Ovary (tissue), 10 donors: ENCODE measurements at regions of chr3 and their contacts with region 1.

Region 1: GRCh38 chr3:73502609-73503583 is 121.8 kb downstream of the PDZRN3 start:
- DNase-seq: peak; percentile 76 to 86 (median 82)
- H3K4me3 ChIP-seq: no peak overlapping the region
- H3K27ac ChIP-seq: peak overlapping the region in 1 of 2 donors; percentile 38
- H3K4me1 ChIP-seq: peaks cover 15% of the 10 kb centered on the region
- H3K27me3 ChIP-seq: no peaks in the 10 kb centered on the region
- CTCF ChIP-seq: peak; percentile 75 to 85 (median 79)
- EP300 ChIP-seq: no peak
- POLR2A ChIP-seq: no peak

Region 2: DNA sequence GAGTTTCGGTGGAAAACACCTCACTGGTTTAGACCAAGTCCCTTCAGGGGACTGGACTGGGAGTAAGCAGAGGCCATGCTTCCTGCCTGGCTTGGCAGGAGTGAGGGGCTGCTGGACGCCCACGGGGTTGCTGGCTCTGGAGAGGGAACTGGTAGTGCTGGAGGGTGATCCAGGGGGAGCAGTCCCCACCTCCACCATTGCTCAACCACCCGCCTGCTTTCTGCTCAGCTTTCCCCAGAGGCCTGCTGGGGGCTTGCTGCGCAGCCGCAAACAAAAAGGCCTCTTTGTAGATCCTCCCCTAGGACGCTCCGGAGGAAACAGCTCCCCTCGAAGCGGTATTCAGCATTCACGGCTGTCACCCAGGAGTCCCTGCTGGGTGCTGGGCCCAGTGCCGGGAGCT is 407.9 kb before region 1 on chr3:
- intact Hi-C with region 1: loop called (anchors 5 kb)
- DNase-seq: no peak
- H3K4me3 ChIP-seq: no peak overlapping the region
- H3K27ac ChIP-seq: no peak overlapping the region
- H3K4me1 ChIP-seq: no peaks in the 10 kb centered on the region
- H3K27me3 ChIP-seq: no peaks in the 10 kb centered on the region
- CTCF ChIP-seq: no peak
- EP300 ChIP-seq: no peak
- POLR2A ChIP-seq: no peak

Region 3: DNA sequence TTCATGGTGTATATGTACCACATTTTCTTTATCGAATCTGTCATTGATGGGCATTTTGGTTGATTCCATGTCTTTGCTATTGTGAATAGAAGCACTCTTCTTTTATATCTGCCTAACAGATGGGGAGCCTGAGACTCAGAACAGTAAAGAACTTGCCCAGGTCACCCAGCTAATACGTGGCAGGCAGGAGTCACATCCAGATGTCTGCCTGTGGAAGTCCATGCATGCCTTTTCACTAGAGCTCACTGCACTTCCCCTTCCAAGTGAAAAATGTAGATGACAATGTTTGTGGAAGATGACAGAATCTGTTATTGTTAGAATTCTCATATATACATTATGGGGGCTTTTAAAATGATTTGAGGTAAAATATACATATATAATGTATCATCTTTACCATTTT is 43.2 kb before region 1 on chr3:
- intact Hi-C with region 1: loop called in 1 of 4 experiments (anchors 5 kb)
- DNase-seq: no peak
- H3K4me3 ChIP-seq: no peak overlapping the region
- H3K27ac ChIP-seq: no peak overlapping the region
- H3K4me1 ChIP-seq: peaks cover 4% of the 10 kb centered on the region
- H3K27me3 ChIP-seq: no peaks in the 10 kb centered on the region
- CTCF ChIP-seq: no peak
- EP300 ChIP-seq: no peak
- POLR2A ChIP-seq: no peak

Region 4: DNA sequence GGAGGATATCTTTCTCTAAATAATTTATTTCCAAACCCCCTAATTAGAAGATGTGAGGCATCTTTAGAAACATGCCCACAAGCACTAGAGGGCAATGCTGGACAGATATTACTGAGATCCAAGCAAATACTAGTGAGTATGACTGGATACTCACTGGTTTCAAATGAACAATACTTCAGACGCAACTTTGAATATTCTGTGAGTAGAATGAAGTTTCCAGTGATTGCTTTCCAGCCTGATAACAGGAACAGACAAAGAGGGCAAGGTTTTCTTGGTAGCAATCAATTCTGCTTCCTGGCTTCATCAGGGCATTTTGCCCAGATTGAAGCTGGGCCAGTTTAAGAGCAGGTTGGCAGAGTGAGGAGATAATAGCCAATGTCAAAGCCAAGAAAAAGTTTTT is 564.4 kb after region 1 on chr3:
- intact Hi-C with region 1: no loop called
- DNase-seq: no peak
- H3K4me3 ChIP-seq: no peak overlapping the region
- H3K27ac ChIP-seq: no peak overlapping the region
- H3K4me1 ChIP-seq: no peaks in the 10 kb centered on the region
- H3K27me3 ChIP-seq: no peaks in the 10 kb centered on the region
- CTCF ChIP-seq: no peak
- EP300 ChIP-seq: no peak
- POLR2A ChIP-seq: no peak